Activated B cell treated with CpG ODN at 0.5 μM for 24 hours (primary cell): ENCODE measurements at regions of chr5 and their contacts with region 1.

Region 1: GRCh38 chr5:121962347-121962670 is 534 bp downstream of the SRFBP1 start:
- DNase-seq: no peak
- ATAC-seq: no peak
- H3K4me3 Mint-ChIP-seq: peak overlapping the region; percentile 98
- H3K27ac Mint-ChIP-seq: peak overlapping the region; percentile 95
- H3K4me1 Mint-ChIP-seq: peaks cover 46% of the 10 kb centered on the region
- H3K27me3 Mint-ChIP-seq: peaks cover 6% of the 10 kb centered on the region
- CTCF ChIP-seq: no peak

Region 2: GRCh38 chr5:120457839-120458507 is 1504.3 kb before region 1 on chr5:
- CTCF ChIA-PET with region 1: no interaction called
- POLR2A ChIA-PET with region 1: no interaction called
- intact Hi-C with region 1: loop called (anchors 5 kb)
- DNase-seq: peak; percentile 61
- ATAC-seq: peak; percentile 85
- H3K4me3 Mint-ChIP-seq: peak overlapping the region; percentile 85
- H3K27ac Mint-ChIP-seq: peak overlapping the region; percentile 84
- H3K4me1 Mint-ChIP-seq: peaks cover 13% of the 10 kb centered on the region
- H3K27me3 Mint-ChIP-seq: peaks cover 5% of the 10 kb centered on the region
- CTCF ChIP-seq: no peak

Region 3: DNA sequence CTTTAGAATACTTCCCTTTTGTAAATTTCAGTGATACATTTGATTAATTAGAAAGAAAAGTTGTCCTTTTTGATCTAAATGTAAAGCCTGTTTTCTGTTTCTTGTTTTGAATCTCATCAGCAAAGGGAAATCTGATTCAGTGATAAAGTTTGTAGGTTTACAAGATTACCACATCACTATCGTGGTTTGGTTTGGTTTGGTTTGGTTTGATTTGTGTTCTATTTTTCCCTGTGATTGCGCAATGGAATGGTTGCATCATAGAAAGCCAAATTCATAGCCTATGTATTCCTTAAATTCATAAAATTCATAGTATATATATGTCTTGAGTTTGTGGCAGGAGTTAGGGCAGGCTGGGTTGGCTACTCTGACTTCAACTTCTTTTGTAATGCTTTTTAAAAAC is 14.7 kb after region 1 on chr5:
- CTCF ChIA-PET with region 1: interaction called, 3 read pairs
- POLR2A ChIA-PET with region 1: no interaction called
- intact Hi-C with region 1: loop called (anchors 1 kb)
- DNase-seq: no peak
- ATAC-seq: no peak
- H3K4me3 Mint-ChIP-seq: no peak overlapping the region
- H3K27ac Mint-ChIP-seq: no peak overlapping the region
- H3K4me1 Mint-ChIP-seq: peaks cover 37% of the 10 kb centered on the region
- H3K27me3 Mint-ChIP-seq: no peaks in the 10 kb centered on the region
- CTCF ChIP-seq: no peak

Region 4: DNA sequence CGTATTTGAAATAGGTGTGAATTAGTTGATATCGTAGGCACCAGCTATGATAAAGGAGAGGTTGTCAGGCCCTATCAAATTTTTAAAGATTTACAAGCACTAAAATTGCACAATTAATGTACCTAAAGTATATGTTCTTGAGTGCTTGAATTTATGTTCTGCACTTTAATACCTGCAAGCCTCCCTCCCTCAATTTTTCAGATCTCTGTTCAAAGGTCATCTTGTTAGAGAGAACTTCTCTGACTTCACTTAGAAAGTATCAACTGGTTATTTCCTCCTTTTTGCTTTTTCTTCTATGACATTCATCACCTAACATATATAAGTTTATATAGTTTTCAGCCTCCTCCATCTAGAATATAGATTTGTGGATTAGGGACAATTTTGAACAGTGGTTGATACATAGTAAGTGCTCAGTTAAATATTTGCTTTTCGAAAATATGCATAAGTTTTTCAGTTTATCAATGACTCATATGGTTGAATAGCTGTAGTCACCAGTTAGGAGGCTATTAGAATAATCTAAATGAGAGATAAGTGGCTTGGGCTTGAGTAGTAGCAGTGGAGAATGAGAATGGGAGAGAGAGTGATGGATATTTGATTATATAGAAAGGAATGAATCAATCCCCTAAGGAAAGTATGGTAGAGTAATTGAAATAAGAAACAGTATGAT is 78.5 kb after region 1 on chr5:
- CTCF ChIA-PET with region 1: no interaction called
- POLR2A ChIA-PET with region 1: no interaction called
- intact Hi-C with region 1: no loop called
- DNase-seq: no peak
- ATAC-seq: no peak
- H3K4me3 Mint-ChIP-seq: no peak overlapping the region
- H3K27ac Mint-ChIP-seq: no peak overlapping the region
- H3K4me1 Mint-ChIP-seq: no peaks in the 10 kb centered on the region
- H3K27me3 Mint-ChIP-seq: no peaks in the 10 kb centered on the region
- CTCF ChIP-seq: no peak

Region 5: DNA sequence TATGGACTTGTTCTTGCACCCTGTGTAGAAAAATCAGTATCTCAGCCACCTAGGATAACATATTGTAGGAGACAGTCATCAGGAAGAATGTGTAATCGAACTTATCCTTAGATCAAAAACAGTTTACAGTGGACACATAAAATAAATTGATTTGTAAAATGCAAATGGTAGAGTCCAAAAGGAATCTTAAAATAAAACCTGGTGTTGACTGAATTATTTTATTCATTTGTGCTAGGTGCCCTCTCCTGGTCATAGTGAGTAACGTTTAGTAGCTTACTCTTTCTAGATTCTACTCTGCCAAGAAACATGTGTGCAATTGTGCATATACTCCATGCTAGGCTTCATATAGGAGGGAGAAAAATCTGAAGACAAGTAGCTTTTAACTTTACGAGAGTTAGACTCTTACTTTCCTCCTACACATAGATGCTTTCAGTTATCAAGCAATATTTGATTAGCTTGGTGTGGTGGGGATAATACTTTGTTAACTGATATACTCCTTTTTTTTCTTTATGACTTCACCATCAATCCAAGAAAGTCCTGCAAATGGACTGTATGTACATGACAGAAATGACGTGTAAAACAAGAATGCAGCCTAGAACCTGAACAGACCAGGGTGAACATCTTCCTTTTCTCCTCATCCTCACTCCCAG is 139.5 kb after region 1 on chr5:
- CTCF ChIA-PET with region 1: interaction called, 6 read pairs
- POLR2A ChIA-PET with region 1: no interaction called
- intact Hi-C with region 1: loop called (anchors 5 kb)
- DNase-seq: no peak
- ATAC-seq: no peak
- H3K4me3 Mint-ChIP-seq: no peak overlapping the region
- H3K27ac Mint-ChIP-seq: no peak overlapping the region
- H3K4me1 Mint-ChIP-seq: no peaks in the 10 kb centered on the region
- H3K27me3 Mint-ChIP-seq: no peaks in the 10 kb centered on the region
- CTCF ChIP-seq: no peak